H1 (cell line): ENCODE measurements at regions of chr4 and their contacts with region 1.

Region 1: GRCh38 chr4:77579406-77580076 is 26.1 kb upstream of the CXCL13 start:
- DNase-seq: no peak
- H3K4me3 ChIP-seq: no peak overlapping the region
- H3K27ac ChIP-seq: no peak overlapping the region
- H3K4me1 ChIP-seq: no peaks in the 10 kb centered on the region
- H3K27me3 ChIP-seq: no peaks in the 10 kb centered on the region
- CTCF ChIP-seq: no peak
- EP300 ChIP-seq: no peak
- POLR2A ChIP-seq: no peak
- RAD21 ChIP-seq: no peak

Region 2: DNA sequence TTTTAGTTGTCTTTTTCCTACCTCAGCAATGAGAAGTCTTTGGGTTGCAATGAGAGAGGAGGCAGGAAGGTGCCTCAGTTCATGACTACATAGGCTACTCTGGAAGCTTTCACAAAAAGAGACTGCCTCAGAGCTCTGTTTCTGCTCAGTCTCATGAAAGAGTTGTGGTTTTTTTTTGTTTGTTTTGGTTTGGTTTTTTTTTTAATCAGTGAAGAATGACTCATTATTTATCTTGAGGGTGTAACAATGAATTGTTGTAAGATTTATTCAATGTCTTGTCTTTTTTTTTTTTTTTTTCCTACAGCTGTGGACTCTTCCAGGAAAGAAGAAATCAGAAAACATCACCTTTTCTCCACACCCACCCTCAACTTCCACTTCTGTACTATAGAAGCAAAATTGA is 41.4 kb before region 1 on chr4:
- CTCF ChIA-PET with region 1: interaction called, 11 read pairs
- POLR2A ChIA-PET with region 1: no interaction called
- DNase-seq: no peak
- H3K4me3 ChIP-seq: no peak overlapping the region
- H3K27ac ChIP-seq: no peak overlapping the region
- H3K4me1 ChIP-seq: no peaks in the 10 kb centered on the region
- H3K27me3 ChIP-seq: no peaks in the 10 kb centered on the region
- CTCF ChIP-seq: no peak
- EP300 ChIP-seq: no peak
- POLR2A ChIP-seq: no peak
- RAD21 ChIP-seq: no peak

Region 3: DNA sequence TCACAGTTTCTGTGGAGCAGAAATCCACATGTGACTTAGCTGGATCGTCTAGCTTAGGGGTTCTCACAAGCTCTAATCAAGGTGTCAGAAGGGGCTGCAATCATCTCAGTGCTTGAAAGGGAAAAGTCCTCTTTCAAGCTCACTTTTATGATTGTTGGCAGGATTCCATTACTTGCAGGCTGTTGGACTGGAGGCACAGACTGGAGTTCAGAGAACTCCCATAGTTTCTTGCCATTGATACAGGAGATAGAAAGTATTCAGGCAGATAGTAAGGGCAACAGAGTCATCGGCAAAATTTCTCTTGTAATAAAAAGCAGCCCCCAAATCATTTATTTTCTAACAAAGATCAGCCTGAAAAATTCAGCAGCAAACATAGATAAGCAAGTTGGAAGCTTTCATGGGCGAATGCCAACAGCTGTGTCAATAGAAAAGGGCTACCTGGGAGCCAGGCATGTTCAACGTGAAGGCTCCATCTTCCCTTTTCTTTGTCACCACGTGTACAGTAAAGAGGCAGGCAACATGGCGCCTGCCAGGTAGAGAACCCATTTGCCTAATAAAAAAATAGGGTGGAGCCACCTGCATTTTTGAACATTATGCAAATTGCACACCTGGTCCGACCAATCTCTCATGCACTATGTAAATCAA is 90.5 kb after region 1 on chr4:
- CTCF ChIA-PET with region 1: no interaction called
- POLR2A ChIA-PET with region 1: no interaction called
- DNase-seq: no peak
- H3K4me3 ChIP-seq: no peak overlapping the region
- H3K27ac ChIP-seq: no peak overlapping the region
- H3K4me1 ChIP-seq: peaks cover 0 to 2% (median 0%) of the 10 kb centered on the region in 4 experiments; a peak in 2 of 7 replicates
- H3K27me3 ChIP-seq: no peaks in the 10 kb centered on the region
- CTCF ChIP-seq: no peak
- EP300 ChIP-seq: no peak
- POLR2A ChIP-seq: no peak
- RAD21 ChIP-seq: no peak

Region 4: GRCh38 chr4:77795326-77795725 is 215.8 kb after region 1 on chr4:
- CTCF ChIA-PET with region 1: no interaction called
- POLR2A ChIA-PET with region 1: no interaction called
- DNase-seq: no peak
- H3K4me3 ChIP-seq: no peak overlapping the region
- H3K27ac ChIP-seq: no peak overlapping the region
- H3K4me1 ChIP-seq: no peaks in the 10 kb centered on the region
- H3K27me3 ChIP-seq: no peaks in the 10 kb centered on the region
- CTCF ChIP-seq: no peak
- EP300 ChIP-seq: no peak
- POLR2A ChIP-seq: no peak
- RAD21 ChIP-seq: no peak

Region 5: GRCh38 chr4:77827343-77827742 is 247.8 kb after region 1 on chr4:
- CTCF ChIA-PET with region 1: no interaction called
- POLR2A ChIA-PET with region 1: no interaction called
- DNase-seq: no peak
- H3K4me3 ChIP-seq: no peak overlapping the region
- H3K27ac ChIP-seq: no peak overlapping the region
- H3K4me1 ChIP-seq: no peaks in the 10 kb centered on the region
- H3K27me3 ChIP-seq: no peaks in the 10 kb centered on the region
- CTCF ChIP-seq: no peak
- EP300 ChIP-seq: no peak
- POLR2A ChIP-seq: no peak
- RAD21 ChIP-seq: no peak